Heart right ventricle (tissue), 16 donors: ENCODE measurements at regions of chr22 and their contacts with region 1.

Region 1: DNA sequence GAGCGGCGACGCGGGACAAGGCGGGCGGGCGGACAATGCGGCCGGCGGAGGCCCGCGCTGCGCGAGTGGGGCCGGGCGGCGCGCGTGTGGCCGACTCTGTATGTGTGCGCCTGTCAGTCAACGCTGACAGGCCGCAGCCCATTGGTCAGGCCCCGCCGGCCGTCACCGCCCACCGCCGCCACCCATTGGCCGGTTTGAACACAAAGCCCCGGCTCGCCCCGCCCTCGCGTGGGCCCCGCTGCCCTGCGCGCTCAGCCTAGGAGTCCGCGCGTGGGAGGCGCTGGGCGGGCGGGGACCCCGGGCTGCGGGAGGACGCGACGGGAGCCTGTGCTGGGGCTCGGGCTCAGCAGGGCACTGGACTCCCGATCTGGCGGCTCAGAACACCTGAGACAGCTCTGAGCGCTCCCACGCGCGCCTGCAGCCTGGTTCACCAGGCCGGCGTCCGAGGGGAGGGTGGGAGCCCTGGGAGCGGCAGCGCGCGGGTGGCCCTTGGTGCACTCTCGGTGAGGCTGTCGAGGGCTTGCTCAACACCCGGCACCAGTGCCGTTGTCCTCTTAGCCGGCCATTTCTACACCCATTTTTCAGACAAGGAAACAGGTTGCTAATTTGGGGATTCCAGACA is at the start of gene SUN2:
- DNase-seq: peak; percentile 92 to 96
- ATAC-seq: peak; percentile 78 to 92 (median 86)
- H3K4me3 ChIP-seq: peak within 1 kb of the TSS; percentile 36 to 82 (median 71)
- H3K27ac ChIP-seq: peak within 1 kb of the TSS; percentile 93 to 99 (median 96)
- H3K4me1 ChIP-seq: peaks cover 2 to 62% (median 27%) of the 10 kb centered on the region in 9 donors
- H3K27me3 ChIP-seq: no peaks in the 10 kb centered on the region
- CTCF ChIP-seq: no peak
- total RNA-seq, gene SUN2: 70.2 to 178 (median 97.2) TPM

Region 2: GRCh38 chr22:38718414-38718813 is 37.6 kb before region 1 on chr22:
- intact Hi-C with region 1: loop called in 1 of 10 experiments (anchors 5 kb)
- DNase-seq: no peak
- ATAC-seq: peak in 6 of 8 donors; percentile 51 to 89 (median 67)
- H3K4me3 ChIP-seq: no peak overlapping the region
- H3K27ac ChIP-seq: peak overlapping the region in 2 of 10 donors; percentile 5 to 8
- H3K4me1 ChIP-seq: peaks cover 3 to 35% (median 22%) of the 10 kb centered on the region in 9 donors
- H3K27me3 ChIP-seq: no peaks in the 10 kb centered on the region
- CTCF ChIP-seq: peak in 8 of 9 donors; percentile 31 to 50 (median 38)